B cell (primary cell): ENCODE measurements at regions of chr2 and their contacts with region 1.

Region 1: GRCh38 chr2:195656859-195657633 is at the start of gene SLC39A10:
- DNase-seq: peak; percentile 100
- ATAC-seq: peak; percentile 86
- H3K4me3 ChIP-seq: peak within 1 kb of the TSS; percentile 87 to 96 (median 93)
- H3K4me3 Mint-ChIP-seq: peak within 1 kb of the TSS; percentile 100
- H3K27ac ChIP-seq: peak within 1 kb of the TSS; percentile 98 to 99
- H3K27ac Mint-ChIP-seq: peak within 1 kb of the TSS; percentile 99
- H3K4me1 ChIP-seq: peaks cover 30 to 39% of the 10 kb centered on the region in 2 donors
- H3K4me1 Mint-ChIP-seq: peaks cover 55% of the 10 kb centered on the region
- H3K27me3 ChIP-seq: no peaks in the 10 kb centered on the region
- H3K27me3 Mint-ChIP-seq: no peaks in the 10 kb centered on the region
- CTCF ChIP-seq: no peak
- total RNA-seq, gene SLC39A10: 99.3 and 99.8 TPM in 2 replicates

Region 2: DNA sequence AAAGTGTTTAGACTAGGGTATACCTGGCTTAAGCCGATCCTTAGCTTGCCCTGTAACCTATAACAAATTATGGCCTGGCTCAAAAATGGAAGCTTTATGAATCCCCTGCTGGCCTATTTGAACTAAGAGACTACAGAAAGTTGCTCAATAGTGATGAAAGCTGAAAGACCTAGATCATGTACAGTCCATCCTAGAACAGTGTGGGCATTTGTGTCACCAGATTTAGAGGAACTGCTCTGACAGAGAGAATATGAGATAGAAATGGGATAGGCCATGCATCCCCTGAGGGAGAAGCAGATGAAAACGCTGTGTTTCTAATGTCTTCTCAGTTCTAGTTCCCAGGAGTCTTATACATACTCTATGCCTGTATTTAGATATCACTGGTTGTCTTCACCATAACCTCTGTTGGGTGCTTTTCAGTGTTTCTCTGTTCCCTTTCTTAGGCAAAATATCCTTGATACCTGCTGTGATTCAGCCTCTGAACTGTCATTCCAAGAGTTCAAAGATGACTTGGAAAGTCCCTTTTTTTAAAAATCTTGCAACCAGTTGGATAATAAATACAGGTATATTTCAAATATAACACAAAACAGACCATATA is 246.9 kb before region 1 on chr2:
- CTCF ChIA-PET with region 1: interaction called, 14 read pairs
- POLR2A ChIA-PET with region 1: no interaction called
- intact Hi-C with region 1: no loop called
- DNase-seq: no peak
- ATAC-seq: no peak
- H3K4me3 ChIP-seq: no peak overlapping the region
- H3K4me3 Mint-ChIP-seq: no peak overlapping the region
- H3K27ac ChIP-seq: no peak overlapping the region
- H3K27ac Mint-ChIP-seq: no peak overlapping the region
- H3K4me1 ChIP-seq: peaks cover 12 to 13% of the 10 kb centered on the region in 2 donors
- H3K4me1 Mint-ChIP-seq: peaks cover 16% of the 10 kb centered on the region
- H3K27me3 ChIP-seq: no peaks in the 10 kb centered on the region
- H3K27me3 Mint-ChIP-seq: no peaks in the 10 kb centered on the region
- CTCF ChIP-seq: no peak

Region 3: GRCh38 chr2:195559431-195559914 is 97.6 kb before region 1 on chr2:
- CTCF ChIA-PET with region 1: interaction called, 49 read pairs
- POLR2A ChIA-PET with region 1: interaction called, 63 read pairs
- intact Hi-C with region 1: loop called (anchors 1 kb)
- DNase-seq: peak; percentile 83
- ATAC-seq: peak; percentile 66
- H3K4me3 ChIP-seq: peak overlapping the region in 1 of 5 experiments; percentile 37
- H3K4me3 Mint-ChIP-seq: peak overlapping the region; percentile 74
- H3K27ac ChIP-seq: peak overlapping the region; percentile 92 to 94
- H3K27ac Mint-ChIP-seq: peak overlapping the region; percentile 98
- H3K4me1 ChIP-seq: peaks cover 54 to 73% of the 10 kb centered on the region in 2 donors
- H3K4me1 Mint-ChIP-seq: peaks cover 58% of the 10 kb centered on the region
- H3K27me3 ChIP-seq: no peaks in the 10 kb centered on the region
- H3K27me3 Mint-ChIP-seq: no peaks in the 10 kb centered on the region
- CTCF ChIP-seq: no peak

Region 4: DNA sequence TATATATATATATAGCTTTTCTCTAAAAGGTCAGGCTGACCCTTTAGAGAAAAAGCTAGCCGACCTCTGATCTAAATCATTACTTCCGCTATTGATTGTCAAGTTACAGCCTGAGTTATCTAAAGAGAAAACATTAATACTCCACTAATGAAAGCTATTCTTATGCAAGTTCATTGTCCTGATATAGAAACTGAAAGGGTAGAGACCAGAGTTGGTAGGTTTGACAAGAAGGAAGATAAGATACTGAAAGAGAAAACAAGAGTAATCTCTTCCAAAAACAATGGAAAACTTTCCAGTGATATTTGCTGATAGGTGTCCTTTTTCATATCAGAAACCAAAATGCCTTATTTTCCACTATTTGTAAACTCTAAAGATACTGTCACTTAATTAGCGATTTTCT is 62.8 kb before region 1 on chr2:
- CTCF ChIA-PET with region 1: interaction called, 13 read pairs
- POLR2A ChIA-PET with region 1: interaction called, 4 read pairs
- intact Hi-C with region 1: no loop called
- DNase-seq: peak; percentile 25
- ATAC-seq: no peak
- H3K4me3 ChIP-seq: no peak overlapping the region
- H3K4me3 Mint-ChIP-seq: peak overlapping the region; percentile 1
- H3K27ac ChIP-seq: no peak overlapping the region
- H3K27ac Mint-ChIP-seq: peak overlapping the region; percentile 2
- H3K4me1 ChIP-seq: peaks cover 12 to 21% of the 10 kb centered on the region in 2 donors
- H3K4me1 Mint-ChIP-seq: peaks cover 31% of the 10 kb centered on the region
- H3K27me3 ChIP-seq: no peaks in the 10 kb centered on the region
- H3K27me3 Mint-ChIP-seq: no peaks in the 10 kb centered on the region
- CTCF ChIP-seq: no peak

Region 5: DNA sequence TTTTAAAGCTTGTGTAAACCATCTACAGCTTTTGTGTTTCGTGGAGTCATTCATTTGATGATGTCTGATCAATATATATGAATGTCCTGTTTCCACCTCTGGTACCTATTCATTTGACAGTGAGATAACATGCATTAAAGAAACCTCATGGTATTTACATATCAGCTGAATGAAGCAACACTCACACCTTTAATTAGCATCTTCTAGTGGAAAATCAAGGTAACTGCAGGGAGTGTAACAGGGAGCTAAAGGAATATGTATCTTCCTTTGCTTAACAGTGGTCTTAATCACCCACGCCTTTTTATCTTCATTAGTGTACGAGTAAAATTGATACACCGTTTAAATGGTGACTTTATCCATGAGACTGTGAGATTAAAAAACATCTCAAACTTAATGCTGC is 15.6 kb after region 1 on chr2:
- CTCF ChIA-PET with region 1: interaction called, 13 read pairs
- POLR2A ChIA-PET with region 1: no interaction called
- intact Hi-C with region 1: no loop called
- DNase-seq: no peak
- ATAC-seq: no peak
- H3K4me3 ChIP-seq: no peak overlapping the region
- H3K4me3 Mint-ChIP-seq: no peak overlapping the region
- H3K27ac ChIP-seq: no peak overlapping the region
- H3K27ac Mint-ChIP-seq: no peak overlapping the region
- H3K4me1 ChIP-seq: no peaks in the 10 kb centered on the region
- H3K4me1 Mint-ChIP-seq: peaks cover 23% of the 10 kb centered on the region
- H3K27me3 ChIP-seq: no peaks in the 10 kb centered on the region
- H3K27me3 Mint-ChIP-seq: no peaks in the 10 kb centered on the region
- CTCF ChIP-seq: no peak

Region 6: GRCh38 chr2:196239622-196240587 is 582.9 kb after region 1 on chr2:
- CTCF ChIA-PET with region 1: no interaction called
- POLR2A ChIA-PET with region 1: no interaction called
- intact Hi-C with region 1: loop called (anchors 2 kb)
- DNase-seq: peak; percentile 90
- ATAC-seq: peak; percentile 68
- H3K4me3 ChIP-seq: peak overlapping the region in 2 of 5 experiments; percentile 23 to 36
- H3K4me3 Mint-ChIP-seq: peak overlapping the region; percentile 74
- H3K27ac ChIP-seq: peak overlapping the region; percentile 91 to 92
- H3K27ac Mint-ChIP-seq: peak overlapping the region; percentile 100
- H3K4me1 ChIP-seq: peaks cover 72 to 84% of the 10 kb centered on the region in 2 donors
- H3K4me1 Mint-ChIP-seq: peaks cover 77% of the 10 kb centered on the region
- H3K27me3 ChIP-seq: no peaks in the 10 kb centered on the region
- H3K27me3 Mint-ChIP-seq: no peaks in the 10 kb centered on the region
- CTCF ChIP-seq: peak; percentile 16